Common myeloid progenitor, CD34-positive (primary cell): ENCODE measurements at regions of chr10 and their contacts with region 1.

Region 1: DNA sequence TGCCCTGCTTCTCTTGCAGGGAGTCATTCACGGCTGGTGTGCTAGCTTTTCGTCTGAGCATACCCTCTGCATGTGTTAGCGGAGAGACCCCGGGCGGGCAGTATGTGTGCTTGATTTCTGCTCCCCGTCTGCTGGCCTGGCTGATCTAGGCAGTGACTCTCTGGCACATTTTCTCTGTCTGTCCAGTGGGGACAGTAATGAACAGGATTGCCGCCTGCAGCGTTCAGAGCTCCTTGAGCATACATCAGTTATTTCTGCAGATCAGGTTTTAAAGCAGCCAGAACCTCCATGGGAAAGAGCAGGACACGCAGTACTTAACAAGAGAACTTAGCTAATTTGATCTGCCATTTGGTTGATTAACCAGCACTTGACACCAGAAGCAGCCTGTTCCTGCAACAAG is 242.5 kb downstream of the CELF2 start:
- DNase-seq: no peak
- H3K4me3 ChIP-seq: no peak overlapping the region
- H3K27ac ChIP-seq: no peak overlapping the region
- H3K4me1 ChIP-seq: peaks cover 13 to 32% (median 24%) of the 10 kb centered on the region in 4 experiments
- H3K27me3 ChIP-seq: no peaks in the 10 kb centered on the region

Region 2: DNA sequence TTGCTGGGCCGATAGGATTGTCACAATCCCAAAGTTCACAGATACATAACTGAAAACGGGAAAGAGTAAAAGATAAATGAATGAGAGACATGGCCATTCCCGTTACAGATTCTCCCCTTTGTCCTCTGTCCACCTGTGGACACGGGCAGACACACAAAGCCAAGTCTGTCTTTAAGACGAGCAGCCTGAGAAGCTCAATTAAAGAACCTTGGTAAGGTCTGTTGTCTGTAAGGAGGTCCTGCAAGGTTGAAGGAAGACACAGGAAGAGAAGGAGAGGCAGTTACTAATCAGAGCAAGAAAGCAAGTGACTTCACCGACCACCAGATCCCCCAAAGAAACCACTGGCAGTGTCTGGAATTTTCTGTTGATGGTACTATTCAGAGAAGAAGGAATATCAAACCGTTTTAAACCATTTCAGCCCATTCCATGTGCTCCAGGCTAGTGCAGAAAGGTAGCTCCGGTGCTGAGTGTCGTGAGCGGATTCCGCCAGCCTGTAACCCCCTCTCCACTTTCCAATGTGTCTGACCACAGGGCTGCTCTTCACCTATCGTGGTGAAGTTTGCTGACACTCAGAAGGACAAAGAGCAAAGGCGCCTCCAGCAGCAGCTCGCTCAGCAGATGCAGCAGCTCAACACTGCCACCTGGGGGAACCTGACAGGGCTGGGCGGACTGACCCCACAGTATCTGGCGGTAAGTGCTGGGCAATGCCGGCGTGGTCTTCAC is 10.1 kb after region 1 on chr10:
- CTCF ChIA-PET with region 1: interaction called, 16 read pairs
- POLR2A ChIA-PET with region 1: no interaction called
- DNase-seq: peak; percentile 59 to 77 (median 74)
- H3K4me3 ChIP-seq: no peak overlapping the region
- H3K27ac ChIP-seq: no peak overlapping the region
- H3K4me1 ChIP-seq: peaks cover 0 to 9% (median 2%) of the 10 kb centered on the region in 4 experiments
- H3K27me3 ChIP-seq: no peaks in the 10 kb centered on the region